Tibial artery (tissue), 4 donors: ENCODE measurements at regions of chr2 and their contacts with region 1.

Region 1: DNA sequence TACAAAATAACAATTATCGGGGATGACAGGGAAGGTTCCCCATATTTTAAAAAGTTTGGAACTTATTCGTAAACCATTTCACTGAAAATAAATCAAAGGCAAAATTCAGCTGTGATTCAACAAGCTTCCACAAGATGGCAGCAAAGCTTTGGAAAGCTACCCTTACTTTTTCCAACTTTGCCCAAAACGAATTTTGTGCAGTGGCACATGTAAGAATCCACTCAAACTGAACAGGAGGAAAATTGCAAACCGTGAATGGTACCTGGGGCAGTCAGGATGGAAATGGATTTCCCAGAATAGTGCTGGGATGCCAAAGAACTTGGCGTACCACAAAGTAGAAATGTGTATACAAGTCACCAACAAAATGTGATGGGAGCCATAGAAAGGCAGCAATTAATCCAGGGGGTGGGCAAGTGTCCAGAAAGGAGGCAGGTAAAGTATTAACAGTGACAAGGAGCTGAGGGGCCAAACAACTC is 10.7 kb downstream of the RPL31 start:
- DNase-seq: no peak
- H3K4me3 ChIP-seq: no peak overlapping the region
- H3K27ac ChIP-seq: no peak overlapping the region
- H3K4me1 ChIP-seq: no peaks in the 10 kb centered on the region
- H3K27me3 ChIP-seq: no peaks in the 10 kb centered on the region
- CTCF ChIP-seq: peak; percentile 83 to 84

Region 2: DNA sequence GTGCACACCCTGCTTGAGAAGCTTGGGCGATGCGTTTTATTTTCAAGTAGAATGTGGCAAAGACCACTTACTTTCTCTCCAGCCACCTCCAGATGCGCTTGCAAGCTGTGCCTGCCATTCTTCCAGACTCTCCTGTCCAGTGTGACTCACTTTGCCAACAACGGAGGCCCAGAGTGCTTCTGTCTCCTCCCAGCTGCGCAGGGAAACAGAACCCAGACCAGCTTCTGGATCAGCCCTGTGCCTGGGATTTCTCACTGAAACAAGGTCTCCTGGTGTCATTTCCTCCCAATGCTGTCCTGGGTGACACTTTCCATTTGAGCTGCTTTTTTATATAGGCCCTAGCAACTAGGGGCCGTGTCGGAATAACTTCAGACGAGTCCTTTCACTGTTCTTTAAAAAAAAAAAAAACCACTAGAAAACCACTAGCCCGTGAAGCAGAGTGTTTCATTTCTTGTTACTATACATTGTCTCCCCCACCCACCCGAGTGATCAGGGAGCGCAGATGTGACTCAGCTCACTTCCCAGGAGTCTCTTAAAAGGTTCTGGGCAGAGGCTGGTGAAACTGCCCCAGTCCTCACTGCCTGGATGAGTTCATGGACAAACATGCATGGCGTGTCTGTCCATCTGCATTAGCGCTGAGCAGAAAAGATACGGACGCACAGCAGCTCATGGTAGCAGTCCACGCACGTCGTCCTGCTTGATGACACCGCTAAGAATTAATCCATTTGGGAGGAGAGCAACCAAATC is 35.9 kb before region 1 on chr2:
- intact Hi-C with region 1: no loop called
- DNase-seq: peak in 1 of 2 donors; percentile 56
- H3K4me3 ChIP-seq: no peak overlapping the region
- H3K27ac ChIP-seq: peak overlapping the region in 1 of 2 donors; percentile 83
- H3K4me1 ChIP-seq: peaks cover 0 to 23% (median 3%) of the 10 kb centered on the region in 4 donors
- H3K27me3 ChIP-seq: no peaks in the 10 kb centered on the region
- CTCF ChIP-seq: no peak

Region 3: DNA sequence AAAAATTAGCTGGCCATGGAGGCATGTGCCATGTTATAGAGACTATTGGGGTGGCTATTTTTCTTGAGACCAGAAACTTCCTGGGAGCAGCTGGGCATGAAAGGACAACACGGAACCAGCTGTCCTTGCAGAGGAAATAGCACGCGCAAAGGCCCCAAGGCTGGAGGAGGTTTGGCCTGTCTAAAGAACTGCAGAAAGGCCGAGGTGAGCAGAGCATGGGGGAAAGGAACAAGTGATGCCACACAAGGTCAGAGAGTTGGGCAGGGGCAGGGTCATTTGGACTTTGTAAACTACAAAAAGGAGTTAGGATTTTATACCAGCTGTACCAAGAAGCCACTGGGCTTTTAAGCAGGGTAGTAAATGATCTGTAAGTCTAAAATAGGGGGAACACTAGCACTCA is 193.3 kb after region 1 on chr2:
- intact Hi-C with region 1: loop called (anchors 2 kb)
- DNase-seq: no peak
- H3K4me3 ChIP-seq: no peak overlapping the region
- H3K27ac ChIP-seq: no peak overlapping the region
- H3K4me1 ChIP-seq: peaks cover 0 to 10% (median 4%) of the 10 kb centered on the region in 4 donors
- H3K27me3 ChIP-seq: no peaks in the 10 kb centered on the region
- CTCF ChIP-seq: no peak